ENCODE measurements at regions of chr6 and their contacts with region 1.

Region 1: GRCh38 chr6:151004415-151005024 is 139.0 kb downstream of the MTHFD1L start:
- DNase-seq: no peak
- ATAC-seq: no peak
- H3K4me3 ChIP-seq: no peak overlapping the region
- H3K27ac ChIP-seq: no peak overlapping the region
- H3K4me1 ChIP-seq: peaks cover 0 to 3% of the 10 kb centered on the region in 2 experiments; a peak in 1 of 5 replicates
- H3K27me3 ChIP-seq: no peaks in the 10 kb centered on the region
- CTCF ChIP-seq: no peak
- EP300 ChIP-seq: no peak
- POLR2A ChIP-seq: no peak
- RAD21 ChIP-seq: no peak

Region 2: GRCh38 chr6:150822932-150823331 is 181.6 kb before region 1 on chr6:
- CTCF ChIA-PET with region 1: no interaction called
- POLR2A ChIA-PET with region 1: no interaction called
- in situ Hi-C with region 1: no loop called
- intact Hi-C with region 1: loop called (anchors 10 kb)
- DNase-seq: no peak
- ATAC-seq: no peak
- H3K4me3 ChIP-seq: no peak overlapping the region
- H3K27ac ChIP-seq: no peak overlapping the region
- H3K4me1 ChIP-seq: no peaks in the 10 kb centered on the region
- H3K27me3 ChIP-seq: peaks cover 29 to 44% of the 10 kb centered on the region in 2 experiments
- CTCF ChIP-seq: no peak
- EP300 ChIP-seq: no peak
- POLR2A ChIP-seq: no peak
- RAD21 ChIP-seq: no peak

Measured in K562 (cell line).